AG04449 (cell line): ENCODE measurements at regions of chr12 and their contacts with region 1.

Region 1: DNA sequence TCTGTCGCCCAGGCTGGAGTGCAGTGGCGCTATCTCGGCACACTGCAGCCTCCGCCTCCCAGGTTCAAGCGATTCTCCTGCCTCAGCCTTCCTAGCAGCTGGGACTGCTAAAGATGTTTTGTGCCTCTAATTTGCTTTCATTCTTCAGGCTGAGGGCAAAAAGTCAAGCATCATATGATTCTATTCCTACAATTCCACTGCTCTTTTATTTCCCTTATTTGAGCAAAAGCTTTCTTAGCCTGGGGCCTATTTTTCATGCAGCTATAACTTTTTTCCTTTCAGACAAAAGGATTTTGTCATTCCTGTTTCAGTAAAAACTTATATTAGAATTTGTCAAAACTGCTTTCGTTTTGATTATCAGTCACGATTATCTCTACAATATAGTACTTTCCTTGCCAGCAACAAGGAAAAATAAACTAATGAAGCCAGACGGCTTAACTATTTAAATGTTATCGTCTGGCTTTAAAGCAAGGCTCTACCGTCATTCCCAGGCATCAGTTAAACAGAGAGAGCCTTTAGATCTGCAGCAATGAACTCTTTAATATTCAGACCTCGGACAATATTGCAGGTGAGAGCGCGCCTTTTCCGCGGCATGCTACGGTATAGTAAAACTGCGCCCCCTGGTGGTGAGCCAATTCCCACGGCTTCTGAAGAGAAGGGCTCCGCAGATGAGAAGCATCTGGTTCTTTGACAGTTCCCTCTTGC is 1.4 kb upstream of the SLC2A13 start:
- DNase-seq: peak; percentile 3
- H3K4me3 ChIP-seq: peak overlapping the region; percentile 29
- CTCF ChIP-seq: peak; percentile 82

Region 2: GRCh38 chr12:39764944-39765560 is 342.2 kb before region 1 on chr12:
- CTCF ChIA-PET with region 1: interaction called, 36 read pairs
- POLR2A ChIA-PET with region 1: no interaction called
- DNase-seq: peak; percentile 7
- H3K4me3 ChIP-seq: no peak overlapping the region
- CTCF ChIP-seq: peak; percentile 60

Region 3: DNA sequence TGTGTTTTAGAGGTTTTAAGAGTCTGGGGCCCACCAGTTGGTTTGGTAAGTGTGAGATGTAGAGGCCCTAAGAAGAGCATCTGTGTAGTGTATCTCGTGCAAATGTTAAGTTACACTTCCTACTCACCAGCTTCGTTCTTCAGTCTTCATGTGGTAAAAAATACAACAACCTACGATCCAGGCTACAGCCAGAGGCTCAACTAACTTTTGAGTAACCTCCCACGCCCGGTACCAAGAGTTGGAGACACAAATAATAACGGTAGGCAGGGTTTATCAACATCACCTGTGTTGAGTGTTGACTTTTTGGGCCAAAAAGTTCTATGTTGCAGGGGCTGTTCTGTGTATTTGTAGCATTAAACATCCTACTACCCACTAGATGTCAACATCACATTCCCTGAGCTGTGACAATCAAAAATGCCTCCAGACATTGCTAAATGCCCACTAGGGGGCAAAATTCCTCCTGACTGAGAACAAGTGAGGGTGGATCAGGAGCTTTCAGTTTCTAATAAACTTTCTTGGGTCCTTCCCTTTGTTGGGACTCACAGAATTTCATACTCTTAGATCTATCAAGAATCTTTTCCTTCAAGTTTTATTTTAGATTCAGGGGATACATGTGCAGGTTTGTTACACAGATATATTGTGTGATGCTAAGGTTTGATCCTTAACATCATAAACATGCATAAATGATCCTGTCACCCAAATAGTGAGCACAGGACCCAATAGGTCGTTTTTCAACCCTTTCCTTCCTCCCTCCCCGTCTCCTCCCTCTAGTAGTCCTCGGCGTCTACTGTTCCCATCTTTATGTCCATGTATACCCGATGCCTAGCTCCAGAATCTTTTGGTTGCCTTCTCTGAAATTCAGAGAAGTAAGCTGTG is 96.1 kb before region 1 on chr12:
- CTCF ChIA-PET with region 1: interaction called, 133 read pairs
- POLR2A ChIA-PET with region 1: interaction called, 5 read pairs
- DNase-seq: peak; percentile 19
- H3K4me3 ChIP-seq: no peak overlapping the region; the same call in 1 of the 2 replicates
- CTCF ChIP-seq: peak; percentile 66

Region 4: GRCh38 chr12:40078266-40078665 is 29.0 kb before region 1 on chr12:
- CTCF ChIA-PET with region 1: no interaction called
- POLR2A ChIA-PET with region 1: no interaction called
- DNase-seq: no peak
- H3K4me3 ChIP-seq: no peak overlapping the region
- CTCF ChIP-seq: no peak

Region 5: DNA sequence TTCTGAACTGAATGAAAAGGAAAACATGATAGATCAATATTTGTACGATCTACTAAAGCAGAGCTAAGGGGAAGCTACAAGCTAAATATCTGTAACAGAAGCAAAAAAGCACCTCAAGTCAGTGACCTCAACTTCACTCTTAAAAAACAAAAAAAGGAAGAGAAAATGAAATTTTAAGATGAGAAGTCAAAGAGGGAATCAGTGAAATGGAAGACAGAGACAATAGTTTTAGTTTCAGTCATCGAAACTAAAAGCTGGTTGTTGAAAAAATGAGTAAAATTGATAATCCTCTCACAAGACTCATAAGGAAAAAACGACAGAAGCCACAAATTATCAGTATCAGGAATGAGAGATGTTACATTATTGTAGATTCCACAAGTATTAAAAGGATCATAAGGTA is 10.6 kb after region 1 on chr12:
- CTCF ChIA-PET with region 1: interaction called, 45 read pairs
- POLR2A ChIA-PET with region 1: no interaction called
- DNase-seq: no peak
- H3K4me3 ChIP-seq: no peak overlapping the region
- CTCF ChIP-seq: no peak

Region 6: GRCh38 chr12:40123486-40123885 is 16.2 kb after region 1 on chr12:
- CTCF ChIA-PET with region 1: interaction called, 45 read pairs
- POLR2A ChIA-PET with region 1: no interaction called
- DNase-seq: no peak
- H3K4me3 ChIP-seq: no peak overlapping the region
- CTCF ChIP-seq: no peak